CD8-positive, alpha-beta T cell (primary cell): ENCODE measurements at regions of chr3 and their contacts with region 1.

Region 1: DNA sequence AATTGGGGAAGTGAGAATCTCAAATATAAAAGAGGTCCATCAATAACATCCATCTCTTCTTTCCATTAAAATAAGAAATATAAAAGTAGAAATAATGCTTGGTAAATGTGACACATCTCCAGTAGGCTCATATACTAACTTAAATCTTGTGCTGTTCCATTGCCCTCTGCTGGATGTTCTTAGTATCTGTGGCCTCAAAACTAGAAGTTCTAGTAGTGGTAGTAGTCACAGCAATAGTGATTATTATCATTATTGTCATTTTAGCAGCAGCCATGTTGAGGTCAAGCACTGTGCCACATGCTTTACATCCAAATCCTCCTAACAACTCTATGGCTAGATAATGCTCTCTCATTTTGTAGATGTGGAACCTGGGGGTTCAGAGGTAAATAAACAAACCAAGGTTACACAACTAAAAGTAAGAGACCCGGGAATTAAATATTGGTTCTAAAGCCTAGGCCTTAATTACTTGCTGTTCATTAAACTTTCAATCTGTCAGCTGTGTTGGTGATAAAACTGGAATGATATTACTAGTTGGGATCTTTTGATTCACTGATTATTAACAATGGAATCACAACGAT is 20.2 kb upstream of the BTLA start:
- DNase-seq: peak in 4 of 9 experiments; percentile 27 to 79 (median 48)
- ATAC-seq: peak; percentile 92
- H3K4me3 ChIP-seq: no peak overlapping the region
- H3K4me3 Mint-ChIP-seq: no peak overlapping the region
- H3K27ac ChIP-seq: no peak overlapping the region
- H3K27ac Mint-ChIP-seq: no peak overlapping the region
- H3K4me1 ChIP-seq: peaks cover 4% of the 10 kb centered on the region
- H3K4me1 Mint-ChIP-seq: peaks cover 16% of the 10 kb centered on the region
- H3K27me3 ChIP-seq: no peaks in the 10 kb centered on the region
- H3K27me3 Mint-ChIP-seq: no peaks in the 10 kb centered on the region
- CTCF ChIP-seq: peak; percentile 80

Region 2: GRCh38 chr3:111032361-111033063 is 1487.0 kb before region 1 on chr3:
- CTCF ChIA-PET with region 1: no interaction called
- POLR2A ChIA-PET with region 1: no interaction called
- intact Hi-C with region 1: no loop called
- DNase-seq: no peak
- ATAC-seq: no peak
- H3K4me3 ChIP-seq: no peak overlapping the region
- H3K4me3 Mint-ChIP-seq: no peak overlapping the region
- H3K27ac ChIP-seq: no peak overlapping the region
- H3K27ac Mint-ChIP-seq: no peak overlapping the region
- H3K4me1 ChIP-seq: no peaks in the 10 kb centered on the region
- H3K4me1 Mint-ChIP-seq: no peaks in the 10 kb centered on the region
- H3K27me3 ChIP-seq: no peaks in the 10 kb centered on the region
- H3K27me3 Mint-ChIP-seq: no peaks in the 10 kb centered on the region
- CTCF ChIP-seq: no peak

Region 3: GRCh38 chr3:112136959-112137693 is 382.4 kb before region 1 on chr3:
- CTCF ChIA-PET with region 1: interaction called, 3 read pairs
- POLR2A ChIA-PET with region 1: no interaction called
- intact Hi-C with region 1: loop called (anchors 1 to 2 kb)
- DNase-seq: peak in 5 of 9 experiments; percentile 35 to 69 (median 46)
- ATAC-seq: peak; percentile 21
- H3K4me3 ChIP-seq: no peak overlapping the region
- H3K4me3 Mint-ChIP-seq: no peak overlapping the region
- H3K27ac ChIP-seq: no peak overlapping the region
- H3K27ac Mint-ChIP-seq: no peak overlapping the region
- H3K4me1 ChIP-seq: peaks cover 36% of the 10 kb centered on the region
- H3K4me1 Mint-ChIP-seq: peaks cover 62% of the 10 kb centered on the region
- H3K27me3 ChIP-seq: no peaks in the 10 kb centered on the region
- H3K27me3 Mint-ChIP-seq: no peaks in the 10 kb centered on the region
- CTCF ChIP-seq: peak; percentile 55

Region 4: DNA sequence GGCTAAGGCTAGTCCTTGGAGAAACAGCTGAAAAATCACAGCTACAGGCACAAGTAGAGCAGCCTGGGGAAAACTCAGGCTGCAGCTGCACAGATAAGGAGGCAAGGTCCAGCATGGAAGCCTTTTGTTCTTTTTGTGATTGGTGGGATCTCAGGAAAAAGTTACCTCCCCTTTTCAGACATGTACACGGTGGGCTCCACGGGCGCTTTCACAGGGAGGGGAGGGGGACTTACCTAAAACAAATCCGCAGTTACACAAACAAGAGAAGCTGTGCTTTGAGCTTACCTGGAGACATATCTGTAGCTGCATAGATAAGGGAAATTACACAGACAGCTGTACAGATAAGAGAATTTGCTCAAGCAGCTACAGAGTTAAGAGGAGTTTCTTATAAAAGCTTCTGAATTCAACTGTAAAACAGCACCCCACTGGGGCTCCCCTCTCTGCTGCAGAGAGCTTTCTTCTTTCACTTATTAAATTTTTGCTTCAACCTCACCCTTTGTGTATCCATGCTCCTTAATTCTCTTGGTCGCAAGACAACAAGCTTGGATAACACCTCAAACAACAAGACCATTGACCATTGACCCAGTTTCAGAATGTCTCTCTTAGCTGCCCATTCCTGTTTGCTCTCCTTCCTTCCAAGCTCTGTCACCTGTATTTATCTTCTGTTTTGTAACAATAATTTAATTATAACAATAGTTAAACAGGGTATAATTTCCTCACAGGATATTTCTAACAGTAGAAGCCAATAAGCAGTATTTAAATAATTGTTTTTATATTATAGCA is 197.5 kb before region 1 on chr3:
- CTCF ChIA-PET with region 1: interaction called, 10 read pairs
- POLR2A ChIA-PET with region 1: no interaction called
- intact Hi-C with region 1: loop called (anchors 1 kb)
- DNase-seq: no peak
- ATAC-seq: no peak
- H3K4me3 ChIP-seq: no peak overlapping the region
- H3K4me3 Mint-ChIP-seq: no peak overlapping the region
- H3K27ac ChIP-seq: no peak overlapping the region
- H3K27ac Mint-ChIP-seq: no peak overlapping the region
- H3K4me1 ChIP-seq: no peaks in the 10 kb centered on the region
- H3K4me1 Mint-ChIP-seq: no peaks in the 10 kb centered on the region
- H3K27me3 ChIP-seq: no peaks in the 10 kb centered on the region
- H3K27me3 Mint-ChIP-seq: no peaks in the 10 kb centered on the region
- CTCF ChIP-seq: no peak

Region 5: GRCh38 chr3:112327371-112327951 is 192.1 kb before region 1 on chr3:
- CTCF ChIA-PET with region 1: interaction called, 11 read pairs
- POLR2A ChIA-PET with region 1: no interaction called
- intact Hi-C with region 1: loop called (anchors 1 kb)
- DNase-seq: peak in 4 of 9 experiments; percentile 33 to 79 (median 56)
- ATAC-seq: peak; percentile 100
- H3K4me3 ChIP-seq: no peak overlapping the region
- H3K4me3 Mint-ChIP-seq: no peak overlapping the region
- H3K27ac ChIP-seq: no peak overlapping the region
- H3K27ac Mint-ChIP-seq: no peak overlapping the region
- H3K4me1 ChIP-seq: no peaks in the 10 kb centered on the region
- H3K4me1 Mint-ChIP-seq: peaks cover 2% of the 10 kb centered on the region
- H3K27me3 ChIP-seq: no peaks in the 10 kb centered on the region
- H3K27me3 Mint-ChIP-seq: peaks cover 2% of the 10 kb centered on the region
- CTCF ChIP-seq: peak; percentile 79

Region 6: GRCh38 chr3:112333002-112333380 is 186.5 kb before region 1 on chr3 and contains the start of gene CD200:
- CTCF ChIA-PET with region 1: interaction called, 13 read pairs
- POLR2A ChIA-PET with region 1: no interaction called
- intact Hi-C with region 1: no loop called
- DNase-seq: peak in 8 of 9 experiments; percentile 24 to 66 (median 46)
- ATAC-seq: peak; percentile 76
- H3K4me3 ChIP-seq: peak within 1 kb of the TSS; percentile 62 to 71
- H3K4me3 Mint-ChIP-seq: peak within 1 kb of the TSS; percentile 94
- H3K27ac ChIP-seq: peak within 1 kb of the TSS in 1 of 2 experiments; percentile 19
- H3K27ac Mint-ChIP-seq: peak within 1 kb of the TSS; percentile 85
- H3K4me1 ChIP-seq: no peaks in the 10 kb centered on the region
- H3K4me1 Mint-ChIP-seq: peaks cover 35% of the 10 kb centered on the region
- H3K27me3 ChIP-seq: peaks cover 0 to 3% of the 10 kb centered on the region in 2 experiments
- H3K27me3 Mint-ChIP-seq: peaks cover 2% of the 10 kb centered on the region
- CTCF ChIP-seq: no peak
- total RNA-seq, gene CD200: 1.1 to 1.2 TPM

Region 7: GRCh38 chr3:112379020-112379690 is 140.4 kb before region 1 on chr3:
- CTCF ChIA-PET with region 1: no interaction called
- POLR2A ChIA-PET with region 1: no interaction called
- intact Hi-C with region 1: no loop called
- DNase-seq: no peak
- ATAC-seq: no peak
- H3K4me3 ChIP-seq: no peak overlapping the region
- H3K4me3 Mint-ChIP-seq: no peak overlapping the region
- H3K27ac ChIP-seq: no peak overlapping the region
- H3K27ac Mint-ChIP-seq: no peak overlapping the region
- H3K4me1 ChIP-seq: no peaks in the 10 kb centered on the region
- H3K4me1 Mint-ChIP-seq: no peaks in the 10 kb centered on the region
- H3K27me3 ChIP-seq: no peaks in the 10 kb centered on the region
- H3K27me3 Mint-ChIP-seq: no peaks in the 10 kb centered on the region
- CTCF ChIP-seq: no peak

Region 8: GRCh38 chr3:112498914-112499711 is 20.4 kb before region 1 on chr3 and contains the start of gene BTLA:
- CTCF ChIA-PET with region 1: interaction called, 5 read pairs
- POLR2A ChIA-PET with region 1: interaction called, 3 read pairs
- intact Hi-C with region 1: loop called in 1 of 2 experiments (anchors 2 kb)
- DNase-seq: peak in 5 of 9 experiments; percentile 11 to 67 (median 24)
- ATAC-seq: peak; percentile 62
- H3K4me3 ChIP-seq: peak within 1 kb of the TSS; percentile 31 to 64
- H3K4me3 Mint-ChIP-seq: peak within 1 kb of the TSS; percentile 88
- H3K27ac ChIP-seq: peak within 1 kb of the TSS; percentile 48 to 65
- H3K27ac Mint-ChIP-seq: peak within 1 kb of the TSS; percentile 90
- H3K4me1 ChIP-seq: peaks cover 35% of the 10 kb centered on the region
- H3K4me1 Mint-ChIP-seq: peaks cover 59% of the 10 kb centered on the region
- H3K27me3 ChIP-seq: no peaks in the 10 kb centered on the region
- H3K27me3 Mint-ChIP-seq: no peaks in the 10 kb centered on the region
- CTCF ChIP-seq: no peak
- total RNA-seq, gene BTLA: 3.0 to 4.6 TPM